Esophagus muscularis mucosa (tissue), 4 donors: ENCODE measurements at regions of chr15 and their contacts with region 1.

Region 1: DNA sequence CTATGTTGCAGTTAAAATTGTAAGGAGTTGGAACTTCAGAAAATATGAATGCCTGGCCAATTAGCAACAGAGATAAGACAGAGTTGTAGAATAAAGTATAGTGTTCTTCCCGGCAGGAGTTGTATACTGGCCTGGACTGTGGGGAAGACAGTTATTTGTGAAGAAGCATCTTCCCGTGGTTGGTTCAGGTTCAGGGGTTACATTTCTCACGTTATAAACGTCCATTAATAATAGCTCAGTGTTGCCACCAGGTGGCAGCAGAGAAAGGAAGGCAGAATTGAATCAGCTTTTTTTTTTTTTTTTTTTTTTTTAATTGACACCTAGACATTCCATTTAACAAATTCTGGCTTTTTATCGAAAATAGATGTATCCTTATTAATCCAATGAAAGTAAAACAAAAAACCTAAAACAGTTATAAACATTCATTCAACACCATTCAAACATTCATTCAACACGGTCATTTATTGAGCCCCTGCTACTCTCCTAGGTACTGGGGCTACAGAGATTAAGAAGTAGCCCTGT is 66.4 kb upstream of the NR2E3 start:
- DNase-seq: no peak
- H3K4me3 ChIP-seq: no peak overlapping the region
- H3K27ac ChIP-seq: no peak overlapping the region
- H3K4me1 ChIP-seq: no peaks in the 10 kb centered on the region
- H3K27me3 ChIP-seq: no peaks in the 10 kb centered on the region
- CTCF ChIP-seq: peak; percentile 66 to 74 (median 68)
- EP300 ChIP-seq: no peak
- POLR2A ChIP-seq: no peak

Region 2: DNA sequence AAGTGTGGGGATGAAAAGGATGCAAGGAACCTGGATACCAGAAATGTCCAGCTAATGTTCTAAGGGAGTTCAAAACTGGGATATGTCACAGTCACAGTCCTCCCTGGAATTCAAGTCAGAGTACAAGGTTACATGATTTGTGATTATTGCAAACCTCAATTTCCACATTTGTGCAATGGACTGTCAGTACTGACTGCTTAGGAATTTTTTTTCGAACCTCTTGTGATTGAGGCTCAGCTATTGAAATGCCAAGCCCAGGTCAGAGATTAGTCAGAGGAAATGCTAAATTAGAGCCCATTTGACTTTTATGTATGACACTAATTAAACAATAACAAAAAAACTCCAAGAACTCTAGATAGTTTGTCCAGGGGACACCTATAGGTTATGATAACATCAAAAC is 418.4 kb before region 1 on chr15:
- intact Hi-C with region 1: no loop called
- DNase-seq: no peak
- H3K4me3 ChIP-seq: no peak overlapping the region
- H3K27ac ChIP-seq: no peak overlapping the region
- H3K4me1 ChIP-seq: peaks cover 24 to 30% (median 29%) of the 10 kb centered on the region in 4 donors
- H3K27me3 ChIP-seq: no peaks in the 10 kb centered on the region
- CTCF ChIP-seq: no peak
- EP300 ChIP-seq: no peak
- POLR2A ChIP-seq: no peak

Region 3: DNA sequence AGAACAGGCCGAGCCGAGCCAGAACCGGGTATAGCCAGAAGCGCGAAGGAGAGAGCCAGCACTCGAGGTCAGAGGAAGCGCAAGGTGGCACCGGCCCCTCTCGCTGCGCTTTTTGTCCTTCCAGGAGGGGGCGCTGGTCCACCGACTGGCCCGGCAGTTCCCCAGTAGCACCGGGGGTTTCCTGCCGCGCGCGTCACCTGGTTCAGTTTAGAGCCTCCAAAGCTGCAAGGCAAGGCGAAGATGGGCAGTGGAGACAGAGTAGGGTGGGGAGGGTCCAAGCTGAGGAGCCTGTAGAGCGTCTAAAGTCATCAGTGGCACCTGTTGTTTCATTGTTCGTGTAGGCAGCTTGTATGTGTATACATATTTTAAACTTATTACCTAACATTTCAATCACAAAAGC is 58.8 kb after region 1 on chr15:
- intact Hi-C with region 1: loop called (anchors 2 kb)
- DNase-seq: no peak
- H3K4me3 ChIP-seq: no peak overlapping the region
- H3K27ac ChIP-seq: no peak overlapping the region
- H3K4me1 ChIP-seq: peaks cover 0 to 10% (median 5%) of the 10 kb centered on the region in 4 donors
- H3K27me3 ChIP-seq: peaks cover 0 to 11% (median 0%) of the 10 kb centered on the region in 4 donors
- CTCF ChIP-seq: peak in 2 of 3 experiments; percentile 22 to 33
- EP300 ChIP-seq: no peak
- POLR2A ChIP-seq: no peak

Region 4: DNA sequence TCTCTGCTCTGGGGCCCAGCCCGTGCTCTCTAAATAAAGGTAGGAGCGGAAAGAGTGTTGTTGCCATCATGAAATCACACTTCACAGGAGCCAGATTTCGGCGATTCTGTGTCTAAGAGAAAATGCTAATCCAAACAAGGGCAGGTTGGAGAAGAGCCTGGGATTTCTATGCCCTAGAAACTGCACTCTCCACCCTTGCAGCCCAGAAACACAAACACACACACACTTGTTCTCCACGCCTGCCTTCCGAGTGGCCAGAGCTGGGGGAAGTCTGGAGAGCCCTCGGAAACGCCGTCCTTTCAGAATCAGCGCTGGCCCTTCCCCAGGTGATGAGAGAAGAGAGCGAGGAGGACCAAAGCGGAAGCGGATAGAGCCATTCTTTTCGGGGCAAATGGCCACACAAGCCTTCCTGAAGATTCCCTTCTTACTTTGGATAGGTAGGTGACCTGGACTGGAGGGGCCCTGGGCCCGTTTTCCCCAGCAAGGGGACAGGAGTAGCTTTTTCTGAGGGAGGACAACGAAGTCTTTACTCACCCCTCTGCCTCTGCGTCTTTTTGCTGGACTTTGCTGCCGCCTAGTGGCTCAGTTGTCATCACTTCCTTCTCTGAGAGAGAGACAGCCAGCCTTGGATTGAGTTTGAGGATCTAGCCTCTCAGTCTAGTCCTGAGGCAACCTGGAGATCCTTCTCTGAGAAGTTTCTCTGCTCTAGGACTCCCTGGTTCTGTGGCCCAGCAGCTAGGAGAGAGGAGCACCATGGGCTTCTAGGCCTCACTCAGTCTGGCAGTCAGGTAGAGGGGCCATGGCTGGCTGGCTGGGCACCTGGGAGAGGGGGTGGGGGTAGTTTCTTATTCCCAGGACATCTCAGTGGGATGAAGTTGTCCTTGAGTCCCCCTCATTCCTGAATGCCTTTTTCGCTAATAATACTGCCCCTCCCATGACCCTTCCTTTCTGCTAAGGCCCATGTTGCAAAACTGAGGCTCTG is 412.0 kb after region 1 on chr15:
- intact Hi-C with region 1: loop called (anchors 10 kb)
- DNase-seq: peak; percentile 96
- H3K4me3 ChIP-seq: peak overlapping the region; percentile 48 to 64 (median 62)
- H3K27ac ChIP-seq: peak overlapping the region; percentile 80 to 93 (median 84)
- H3K4me1 ChIP-seq: peaks cover 0 to 40% (median 35%) of the 10 kb centered on the region in 4 donors
- H3K27me3 ChIP-seq: no peaks in the 10 kb centered on the region
- CTCF ChIP-seq: peak; percentile 77 to 90 (median 84)
- EP300 ChIP-seq: no peak
- POLR2A ChIP-seq: no peak